ENCODE measurements at regions of chr18 and their contacts with region 1.

Region 1: DNA sequence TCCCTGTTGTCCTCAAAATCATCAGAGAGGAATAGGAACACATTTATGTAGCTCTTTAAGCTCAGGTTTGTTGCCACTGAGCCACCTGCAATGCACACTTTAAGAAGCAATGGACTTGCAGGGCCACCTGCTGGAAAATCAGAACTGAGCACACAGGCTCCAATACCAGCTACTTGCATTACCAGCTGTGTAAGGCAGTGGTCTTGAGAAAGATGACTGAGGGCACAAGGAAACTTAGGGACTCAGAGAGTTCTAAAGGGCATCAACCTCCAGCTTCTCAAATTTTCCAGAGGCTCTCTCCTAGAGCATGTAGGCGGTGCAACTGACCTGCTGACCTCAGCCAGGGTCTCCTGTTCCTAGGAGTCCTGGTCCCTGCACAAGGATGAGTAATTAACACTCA is 2.5 kb upstream of the CNDP2 start:
- DNase-seq: peak in 1 of 3 donors; percentile 75
- ATAC-seq: peak in 3 of 4 donors; percentile 9 to 24 (median 18)
- H3K4me3 ChIP-seq: no peak overlapping the region
- H3K27ac ChIP-seq: no peak overlapping the region
- H3K4me1 ChIP-seq: peaks cover 0 to 18% (median 9%) of the 10 kb centered on the region in 4 donors
- H3K27me3 ChIP-seq: no peaks in the 10 kb centered on the region
- CTCF ChIP-seq: peak; percentile 74 to 93 (median 86)
- POLR2A ChIP-seq: no peak

Region 2: DNA sequence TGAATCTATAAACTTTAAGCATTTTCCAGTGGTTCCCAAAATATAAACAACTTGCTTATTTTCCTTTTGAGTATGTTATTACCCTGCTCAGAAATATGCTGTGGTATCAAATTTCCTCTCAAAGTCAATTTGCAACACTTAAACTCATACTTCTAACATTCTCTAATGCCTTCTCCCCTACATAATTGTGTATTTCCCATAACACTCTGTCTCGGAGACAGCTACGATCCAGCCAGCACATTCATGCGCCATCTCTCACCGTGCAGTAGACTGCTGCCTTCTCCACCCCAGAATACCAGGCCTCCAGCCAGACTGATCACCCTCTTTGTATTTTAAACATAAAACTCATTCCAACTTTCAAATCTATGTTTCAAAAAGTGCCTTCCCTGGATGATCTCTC is 303.6 kb before region 1 on chr18:
- intact Hi-C with region 1: no loop called
- DNase-seq: no peak
- ATAC-seq: no peak
- H3K4me3 ChIP-seq: no peak overlapping the region
- H3K27ac ChIP-seq: no peak overlapping the region
- H3K4me1 ChIP-seq: no peaks in the 10 kb centered on the region
- H3K27me3 ChIP-seq: no peaks in the 10 kb centered on the region
- CTCF ChIP-seq: no peak
- POLR2A ChIP-seq: no peak

Region 3: GRCh38 chr18:74353169-74353775 is 140.4 kb before region 1 on chr18:
- intact Hi-C with region 1: loop called in 1 of 2 experiments (anchors 5 kb)
- DNase-seq: peak in 2 of 3 donors; percentile 30 to 77
- ATAC-seq: peak; percentile 96 to 98 (median 98)
- H3K4me3 ChIP-seq: no peak overlapping the region
- H3K27ac ChIP-seq: no peak overlapping the region
- H3K4me1 ChIP-seq: peaks cover 0 to 20% (median 0%) of the 10 kb centered on the region in 4 donors
- H3K27me3 ChIP-seq: no peaks in the 10 kb centered on the region
- CTCF ChIP-seq: peak; percentile 74 to 91 (median 78)
- POLR2A ChIP-seq: no peak

Region 4: DNA sequence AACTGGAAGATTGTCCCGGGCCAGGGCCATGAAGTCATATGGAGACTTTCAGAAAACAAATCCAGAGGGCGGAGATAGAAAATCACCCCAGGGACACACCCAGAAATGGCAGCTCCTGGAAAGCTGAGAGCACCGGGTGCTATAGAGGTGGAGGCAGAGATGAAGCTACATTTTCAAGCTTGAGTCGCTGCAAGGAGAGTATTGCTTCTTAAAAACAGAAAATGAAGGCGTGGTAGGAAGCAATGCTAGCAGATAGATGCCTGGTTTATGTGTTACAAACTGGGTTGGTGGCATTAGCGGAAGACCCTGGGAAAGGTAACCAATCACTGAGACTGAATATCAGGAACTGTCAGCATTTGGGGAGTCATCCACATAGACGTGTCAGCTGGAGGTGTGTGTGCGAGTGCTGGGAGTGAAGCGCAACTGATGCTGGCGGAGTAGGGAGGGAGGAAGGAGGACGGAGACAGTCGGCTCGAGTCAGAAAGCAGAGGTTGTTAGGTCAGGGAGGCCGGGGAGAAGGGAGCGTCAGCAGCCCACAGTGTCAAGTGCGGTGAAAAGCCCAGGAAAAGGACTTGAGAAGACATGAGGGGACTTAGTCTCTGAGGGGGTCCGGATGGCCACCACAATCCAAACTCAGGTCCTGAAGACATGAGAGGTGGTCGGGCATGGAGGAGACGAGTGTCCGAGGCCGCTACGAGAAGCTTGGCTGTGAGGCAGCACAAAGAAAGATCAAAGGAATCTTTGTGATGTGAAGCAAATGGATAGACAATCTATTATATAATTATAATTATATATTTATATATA is 132.6 kb before region 1 on chr18:
- intact Hi-C with region 1: loop called in 1 of 2 experiments (anchors 5 kb)
- DNase-seq: no peak
- ATAC-seq: no peak
- H3K4me3 ChIP-seq: no peak overlapping the region
- H3K27ac ChIP-seq: no peak overlapping the region
- H3K4me1 ChIP-seq: peaks cover 0 to 18% (median 0%) of the 10 kb centered on the region in 4 donors
- H3K27me3 ChIP-seq: no peaks in the 10 kb centered on the region
- CTCF ChIP-seq: no peak
- POLR2A ChIP-seq: no peak

Region 5: GRCh38 chr18:74378179-74378682 is 115.5 kb before region 1 on chr18:
- intact Hi-C with region 1: loop called in 1 of 2 experiments (anchors 10 kb)
- DNase-seq: no peak
- ATAC-seq: peak in 1 of 4 donors; percentile 31
- H3K4me3 ChIP-seq: no peak overlapping the region
- H3K27ac ChIP-seq: no peak overlapping the region
- H3K4me1 ChIP-seq: no peaks in the 10 kb centered on the region
- H3K27me3 ChIP-seq: no peaks in the 10 kb centered on the region
- CTCF ChIP-seq: no peak
- POLR2A ChIP-seq: no peak

Region 6: GRCh38 chr18:74389171-74389927 is 104.3 kb before region 1 on chr18:
- intact Hi-C with region 1: no loop called
- DNase-seq: no peak
- ATAC-seq: peak; percentile 54 to 74 (median 64)
- H3K4me3 ChIP-seq: no peak overlapping the region
- H3K27ac ChIP-seq: no peak overlapping the region
- H3K4me1 ChIP-seq: no peaks in the 10 kb centered on the region
- H3K27me3 ChIP-seq: no peaks in the 10 kb centered on the region
- CTCF ChIP-seq: no peak
- POLR2A ChIP-seq: no peak